Psoas muscle (tissue), 8 donors: ENCODE measurements at regions of chr20 and their contacts with region 1.

Region 1: DNA sequence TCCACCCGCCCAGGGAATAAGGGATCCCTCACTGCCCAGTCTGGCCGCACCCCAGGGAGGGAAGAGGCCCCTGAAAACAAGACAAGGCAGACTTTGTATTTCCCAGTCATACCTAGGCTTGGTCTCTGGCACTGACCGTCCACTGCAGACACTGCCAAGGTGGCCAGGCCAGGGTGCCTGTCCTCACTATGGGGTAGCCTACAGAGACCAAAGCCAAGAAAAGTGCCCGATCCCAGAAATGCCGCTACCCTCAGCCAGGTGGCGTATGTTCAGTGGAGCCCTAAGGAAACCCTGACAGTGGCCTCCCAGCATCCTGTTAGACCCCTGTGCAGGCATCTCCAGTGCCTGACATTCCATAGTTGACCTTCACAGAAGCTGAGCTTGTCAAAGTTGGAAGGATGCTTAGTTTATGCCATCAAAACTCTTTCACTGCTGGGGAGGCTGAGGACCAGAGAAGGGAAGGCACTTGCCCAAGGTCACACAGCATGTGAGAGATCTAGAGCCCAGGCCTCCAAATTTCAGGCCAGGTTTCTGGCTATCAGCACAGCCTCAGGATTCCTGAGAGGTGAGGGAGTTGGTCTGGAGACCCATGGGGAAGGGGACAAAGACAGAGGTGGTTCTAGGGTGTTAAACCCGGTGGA is 2.5 kb downstream of the SCRT2 start:
- DNase-seq: no peak
- ATAC-seq: no peak
- H3K4me3 ChIP-seq: no peak overlapping the region
- H3K27ac ChIP-seq: no peak overlapping the region
- H3K4me1 ChIP-seq: peaks cover 21% of the 10 kb centered on the region
- H3K27me3 ChIP-seq: peaks cover 0 to 29% (median 5%) of the 10 kb centered on the region in 3 donors
- CTCF ChIP-seq: no peak

Region 2: DNA sequence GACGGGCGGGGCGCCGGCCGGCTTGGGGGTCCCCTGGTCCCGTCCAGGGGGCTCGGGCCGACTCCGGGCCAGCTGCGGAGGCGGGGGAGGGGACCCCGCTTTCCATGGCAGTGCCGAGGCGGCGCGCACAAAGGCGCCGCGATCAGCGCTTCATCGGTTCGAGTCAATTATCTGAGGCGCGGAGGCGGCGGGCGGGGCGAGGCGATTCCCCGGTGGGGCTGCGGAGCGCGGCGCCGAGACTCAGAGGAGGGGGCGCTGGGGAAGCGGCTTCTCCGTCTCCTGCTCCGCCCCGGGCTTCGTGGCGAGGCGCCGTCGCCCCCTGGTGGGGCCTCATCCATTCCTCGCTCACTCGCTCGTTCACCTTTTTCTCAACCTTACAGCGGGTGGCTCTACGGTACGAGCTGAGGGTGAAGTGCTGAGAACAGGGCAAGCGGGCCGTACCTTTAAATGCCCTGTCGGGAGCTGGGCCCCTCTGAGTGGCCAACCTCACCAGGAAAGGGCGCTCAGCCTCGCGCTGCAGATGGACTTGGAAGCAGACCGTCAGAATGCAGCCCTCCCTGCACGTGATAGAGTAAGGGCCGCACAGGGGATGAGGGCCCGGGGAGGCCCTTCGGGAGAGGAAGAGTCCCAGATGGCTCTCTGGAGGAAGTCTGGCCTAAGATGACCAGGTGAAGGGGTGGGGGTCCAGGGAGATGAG is 55.3 kb after region 1 on chr20:
- intact Hi-C with region 1: loop called in 1 of 2 experiments (anchors 5 kb)
- DNase-seq: peak; percentile 41 to 64
- ATAC-seq: peak; percentile 77 to 90 (median 78)
- H3K4me3 ChIP-seq: peak overlapping the region; percentile 71
- H3K27ac ChIP-seq: no peak overlapping the region
- H3K4me1 ChIP-seq: peaks cover 5% of the 10 kb centered on the region
- H3K27me3 ChIP-seq: peaks cover 0 to 42% (median 9%) of the 10 kb centered on the region in 3 donors
- CTCF ChIP-seq: peak; percentile 69

Region 3: DNA sequence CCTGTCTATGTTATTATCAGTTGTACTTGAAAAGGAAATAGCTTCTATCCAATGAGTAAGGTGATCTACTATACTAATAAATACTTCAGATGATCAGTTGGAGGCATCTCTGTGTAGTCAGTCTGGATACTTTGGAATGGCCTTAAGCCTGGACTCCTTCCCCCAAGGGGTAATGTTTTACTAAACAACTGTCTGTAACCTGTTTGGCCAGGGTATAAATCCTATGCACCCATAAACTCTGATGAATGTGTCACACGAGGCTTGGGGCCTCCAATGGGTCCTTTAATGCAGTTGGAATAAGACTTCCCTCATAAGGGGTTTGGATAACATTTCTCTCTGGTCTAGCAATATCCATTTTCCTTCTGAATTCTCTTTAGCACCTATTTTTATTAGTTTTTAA is 114.7 kb after region 1 on chr20:
- intact Hi-C with region 1: no loop called
- DNase-seq: no peak
- ATAC-seq: no peak
- H3K4me3 ChIP-seq: no peak overlapping the region
- H3K27ac ChIP-seq: no peak overlapping the region
- H3K4me1 ChIP-seq: no peaks in the 10 kb centered on the region
- H3K27me3 ChIP-seq: peaks cover 0 to 4% (median 0%) of the 10 kb centered on the region in 3 donors
- CTCF ChIP-seq: no peak